Gastrocnemius medialis (tissue), 4 donors: ENCODE measurements at regions of chr16 and their contacts with region 1.

Region 1: GRCh38 chr16:13919683-13920509 is at the start of gene ERCC4:
- DNase-seq: peak; percentile 99 to 100
- ATAC-seq: peak; percentile 95 to 97
- H3K4me3 ChIP-seq: peak within 1 kb of the TSS; percentile 83 to 95 (median 90)
- H3K27ac ChIP-seq: peak within 1 kb of the TSS; percentile 78 to 93 (median 88)
- H3K4me1 ChIP-seq: peaks cover 28 to 32% of the 10 kb centered on the region in 2 donors
- H3K27me3 ChIP-seq: no peaks in the 10 kb centered on the region
- CTCF ChIP-seq: peak; percentile 85 to 98 (median 89)
- POLR2A ChIP-seq: peak; percentile 39 to 54
- total RNA-seq, gene ERCC4: 7.1 to 11.5 (median 8.4) TPM

Region 2: GRCh38 chr16:13896543-13897183 is 23.2 kb before region 1 on chr16:
- in situ Hi-C with region 1: no loop called
- intact Hi-C with region 1: no loop called
- DNase-seq: no peak
- ATAC-seq: no peak
- H3K4me3 ChIP-seq: no peak overlapping the region
- H3K27ac ChIP-seq: no peak overlapping the region
- H3K4me1 ChIP-seq: peaks cover 9 to 37% of the 10 kb centered on the region in 2 donors
- H3K27me3 ChIP-seq: no peaks in the 10 kb centered on the region
- CTCF ChIP-seq: no peak
- POLR2A ChIP-seq: no peak

Region 3: GRCh38 chr16:14003074-14003570 is 83.2 kb after region 1 on chr16:
- in situ Hi-C with region 1: no loop called
- intact Hi-C with region 1: no loop called
- DNase-seq: peak in 1 of 2 donors; percentile 48
- ATAC-seq: peak; percentile 59 to 60
- H3K4me3 ChIP-seq: peak overlapping the region; percentile 45 to 56 (median 46)
- H3K27ac ChIP-seq: peak overlapping the region; percentile 41 to 76 (median 72)
- H3K4me1 ChIP-seq: peaks cover 41 to 59% of the 10 kb centered on the region in 2 donors
- H3K27me3 ChIP-seq: no peaks in the 10 kb centered on the region
- CTCF ChIP-seq: peak in 2 of 5 experiments; percentile 31 to 69
- POLR2A ChIP-seq: no peak

Region 4: GRCh38 chr16:14013571-14014282 is 93.8 kb after region 1 on chr16:
- in situ Hi-C with region 1: no loop called
- intact Hi-C with region 1: loop called (anchors 5 kb)
- DNase-seq: peak; percentile 25 to 38
- ATAC-seq: peak; percentile 69 to 80
- H3K4me3 ChIP-seq: peak overlapping the region; percentile 26 to 47 (median 41)
- H3K27ac ChIP-seq: peak overlapping the region; percentile 70 to 79 (median 77)
- H3K4me1 ChIP-seq: peaks cover 44 to 46% of the 10 kb centered on the region in 2 donors
- H3K27me3 ChIP-seq: no peaks in the 10 kb centered on the region
- CTCF ChIP-seq: no peak
- POLR2A ChIP-seq: no peak

Region 5: DNA sequence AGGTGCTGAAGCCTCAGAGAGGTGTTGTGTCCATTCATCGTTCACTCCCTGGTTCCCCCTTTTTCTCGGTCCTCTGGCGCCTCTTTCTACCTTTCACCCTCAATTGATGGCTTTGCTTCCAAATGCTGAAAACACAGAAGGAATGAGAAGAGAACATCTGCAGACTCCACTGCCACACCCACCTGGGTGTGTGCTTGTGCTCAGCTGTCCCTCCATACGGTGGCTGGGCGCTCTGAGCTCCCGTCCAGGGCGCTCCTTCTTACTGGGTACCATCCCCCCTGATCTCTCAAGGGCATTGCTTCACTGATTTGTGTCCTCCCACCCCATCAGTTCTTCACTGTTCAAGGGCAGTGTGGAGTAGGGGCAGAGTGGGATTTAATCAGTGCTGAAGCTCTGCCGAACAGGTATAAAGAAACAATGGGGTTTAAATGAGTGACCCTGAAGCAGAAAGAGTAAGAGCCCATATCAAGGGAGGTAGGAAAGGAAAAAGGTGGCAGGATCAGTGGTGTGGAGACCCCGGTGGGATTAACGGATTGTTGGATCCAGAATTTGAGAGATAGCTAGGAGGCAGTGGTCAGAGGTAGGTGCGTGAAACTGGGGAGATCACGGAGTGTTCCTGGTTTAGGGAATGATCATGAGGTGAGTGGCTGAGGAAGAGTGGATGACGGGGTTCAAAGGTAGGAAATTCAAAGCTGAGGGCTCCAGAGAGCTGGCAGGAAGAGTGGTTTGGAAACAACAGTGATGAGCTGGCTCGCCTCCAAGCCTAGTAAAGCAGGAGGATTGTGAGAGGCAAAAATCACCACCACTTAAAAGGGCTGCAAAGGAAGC is 192.0 kb after region 1 on chr16:
- in situ Hi-C with region 1: no loop called
- intact Hi-C with region 1: loop called (anchors 5 kb)
- DNase-seq: peak in 1 of 2 donors; percentile 46
- ATAC-seq: peak in 1 of 2 donors; percentile 13
- H3K4me3 ChIP-seq: no peak overlapping the region
- H3K27ac ChIP-seq: peak overlapping the region; percentile 80 to 88 (median 84)
- H3K4me1 ChIP-seq: peaks cover 87 to 90% of the 10 kb centered on the region in 2 donors
- H3K27me3 ChIP-seq: no peaks in the 10 kb centered on the region
- CTCF ChIP-seq: no peak
- POLR2A ChIP-seq: no peak

Region 6: GRCh38 chr16:14193316-14193871 is 273.5 kb after region 1 on chr16:
- in situ Hi-C with region 1: loop called in 2 of 4 experiments (anchors 5 to 10 kb)
- intact Hi-C with region 1: loop called (anchors 2 kb)
- DNase-seq: no peak
- ATAC-seq: peak in 1 of 2 donors; percentile 25
- H3K4me3 ChIP-seq: peak overlapping the region in 1 of 4 donors; percentile 2
- H3K27ac ChIP-seq: peak overlapping the region; percentile 35 to 51 (median 46)
- H3K4me1 ChIP-seq: peaks cover 40 to 46% of the 10 kb centered on the region in 2 donors
- H3K27me3 ChIP-seq: no peaks in the 10 kb centered on the region
- CTCF ChIP-seq: no peak
- POLR2A ChIP-seq: no peak

Region 7: GRCh38 chr16:14285513-14286385 is 365.9 kb after region 1 on chr16:
- in situ Hi-C with region 1: loop called in 1 of 4 experiments (anchors 10 kb)
- intact Hi-C with region 1: loop called (anchors 1 kb)
- DNase-seq: peak; percentile 74 to 87
- ATAC-seq: peak; percentile 80 to 82
- H3K4me3 ChIP-seq: peak overlapping the region; percentile 65 to 91 (median 83)
- H3K27ac ChIP-seq: peak overlapping the region; percentile 84 to 96 (median 94)
- H3K4me1 ChIP-seq: peaks cover 4 to 6% of the 10 kb centered on the region in 2 donors
- H3K27me3 ChIP-seq: no peaks in the 10 kb centered on the region
- CTCF ChIP-seq: no peak
- POLR2A ChIP-seq: peak; percentile 69 to 83

Region 8: GRCh38 chr16:14600164-14600563 is 680.3 kb after region 1 on chr16:
- in situ Hi-C with region 1: loop called in 1 of 4 experiments (anchors 10 kb)
- intact Hi-C with region 1: no loop called
- DNase-seq: no peak
- ATAC-seq: no peak
- H3K4me3 ChIP-seq: no peak overlapping the region
- H3K27ac ChIP-seq: no peak overlapping the region
- H3K4me1 ChIP-seq: no peaks in the 10 kb centered on the region
- H3K27me3 ChIP-seq: no peaks in the 10 kb centered on the region
- CTCF ChIP-seq: peak in 3 of 5 experiments; percentile 17 to 40 (median 24)
- POLR2A ChIP-seq: no peak